A549 (cell line): ENCODE measurements at regions of chr17 and their contacts with region 1.

Region 1: GRCh38 chr17:75779231-75779986 is 5.2 kb upstream of the UNK start:
- DNase-seq: peak; percentile 100
- ATAC-seq: peak; percentile 55 to 82
- H3K4me3 ChIP-seq: peak overlapping the region; percentile 69
- H3K27ac ChIP-seq: peak overlapping the region; percentile 93 to 95
- H3K4me1 ChIP-seq: peaks cover 41% of the 10 kb centered on the region
- CTCF ChIP-seq: no peak; the same call in 2 of the 3 replicates
- EP300 ChIP-seq: no peak
- POLR2A ChIP-seq: peak; percentile 100
- RAD21 ChIP-seq: no peak

Region 2: GRCh38 chr17:75645889-75646637 is 133.3 kb before region 1 on chr17:
- CTCF ChIA-PET with region 1: interaction called, 4 read pairs
- POLR2A ChIA-PET with region 1: interaction called, 15 read pairs
- DNase-seq: peak; percentile 94 to 99
- ATAC-seq: peak; percentile 90 to 96
- H3K4me3 ChIP-seq: peak overlapping the region; percentile 25; the same call in 1 of the 3 replicates
- H3K27ac ChIP-seq: peak overlapping the region; percentile 91 to 92
- H3K4me1 ChIP-seq: peaks cover 31% of the 10 kb centered on the region
- CTCF ChIP-seq: no peak
- EP300 ChIP-seq: no peak
- POLR2A ChIP-seq: peak; percentile 38; the same call in 1 of the 2 replicates
- RAD21 ChIP-seq: no peak; a peak in 1 of 5 replicates

Region 3: DNA sequence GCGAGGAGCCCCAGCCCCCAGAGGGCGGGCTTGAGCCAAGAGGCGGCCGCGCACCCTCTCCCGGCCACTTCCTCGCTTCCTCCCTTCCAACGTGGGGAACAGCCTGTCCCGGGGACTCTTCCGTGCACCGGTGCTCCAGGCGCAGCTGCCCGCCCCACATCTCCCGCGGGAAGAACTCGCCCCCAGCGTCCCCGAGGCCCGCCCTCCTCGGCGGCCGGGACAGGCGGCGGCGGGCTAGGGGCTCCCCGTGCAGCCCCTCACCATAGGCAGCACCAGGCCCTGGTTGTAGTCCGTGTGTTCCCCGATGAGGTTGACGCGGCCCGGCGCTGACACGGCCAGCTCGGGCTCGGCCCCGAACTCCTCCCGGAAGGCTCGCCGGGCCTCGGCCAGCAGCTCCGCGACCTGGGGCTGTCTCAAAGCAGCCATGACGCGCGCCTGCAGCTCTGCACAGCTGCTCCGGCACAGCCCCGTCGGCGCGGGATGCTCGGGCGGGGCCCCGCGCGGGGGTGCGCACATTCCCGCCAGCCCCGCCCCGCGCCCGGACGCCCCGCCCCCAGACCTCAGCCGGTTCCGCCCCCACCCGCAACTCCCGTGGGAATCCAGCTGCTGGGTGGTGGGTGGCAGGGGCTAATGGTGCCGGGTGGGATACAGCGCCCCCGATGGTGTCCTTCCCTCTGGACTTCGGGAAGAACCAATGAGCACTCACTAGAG is 14.5 kb before region 1 on chr17 and contains the start of gene GALK1:
- CTCF ChIA-PET with region 1: interaction called, 131 read pairs
- POLR2A ChIA-PET with region 1: interaction called, 73 read pairs
- DNase-seq: peak; percentile 78 to 81
- ATAC-seq: peak; percentile 89 to 91
- H3K4me3 ChIP-seq: peak within 1 kb of the TSS; percentile 68
- H3K27ac ChIP-seq: peak within 1 kb of the TSS; percentile 83 to 92
- H3K4me1 ChIP-seq: peaks cover 13% of the 10 kb centered on the region
- CTCF ChIP-seq: peak; percentile 65
- EP300 ChIP-seq: no peak
- POLR2A ChIP-seq: peak; percentile 71
- RAD21 ChIP-seq: peak; percentile 59 to 66
- polyA plus RNA-seq, gene GALK1: 20.7 and 21.3 TPM in 2 replicates

Region 4: GRCh38 chr17:75814900-75815373 is 35.5 kb after region 1 on chr17:
- CTCF ChIA-PET with region 1: interaction called, 4 read pairs
- POLR2A ChIA-PET with region 1: interaction called, 25 read pairs
- DNase-seq: peak in 1 of 2 experiments; percentile 46
- ATAC-seq: peak; percentile 73 to 80
- H3K4me3 ChIP-seq: no peak overlapping the region
- H3K27ac ChIP-seq: peak overlapping the region; percentile 49 to 70; a peak in 4 of 6 replicates
- H3K4me1 ChIP-seq: peaks cover 14% of the 10 kb centered on the region
- CTCF ChIP-seq: no peak
- EP300 ChIP-seq: no peak
- POLR2A ChIP-seq: no peak
- RAD21 ChIP-seq: no peak

Region 5: DNA sequence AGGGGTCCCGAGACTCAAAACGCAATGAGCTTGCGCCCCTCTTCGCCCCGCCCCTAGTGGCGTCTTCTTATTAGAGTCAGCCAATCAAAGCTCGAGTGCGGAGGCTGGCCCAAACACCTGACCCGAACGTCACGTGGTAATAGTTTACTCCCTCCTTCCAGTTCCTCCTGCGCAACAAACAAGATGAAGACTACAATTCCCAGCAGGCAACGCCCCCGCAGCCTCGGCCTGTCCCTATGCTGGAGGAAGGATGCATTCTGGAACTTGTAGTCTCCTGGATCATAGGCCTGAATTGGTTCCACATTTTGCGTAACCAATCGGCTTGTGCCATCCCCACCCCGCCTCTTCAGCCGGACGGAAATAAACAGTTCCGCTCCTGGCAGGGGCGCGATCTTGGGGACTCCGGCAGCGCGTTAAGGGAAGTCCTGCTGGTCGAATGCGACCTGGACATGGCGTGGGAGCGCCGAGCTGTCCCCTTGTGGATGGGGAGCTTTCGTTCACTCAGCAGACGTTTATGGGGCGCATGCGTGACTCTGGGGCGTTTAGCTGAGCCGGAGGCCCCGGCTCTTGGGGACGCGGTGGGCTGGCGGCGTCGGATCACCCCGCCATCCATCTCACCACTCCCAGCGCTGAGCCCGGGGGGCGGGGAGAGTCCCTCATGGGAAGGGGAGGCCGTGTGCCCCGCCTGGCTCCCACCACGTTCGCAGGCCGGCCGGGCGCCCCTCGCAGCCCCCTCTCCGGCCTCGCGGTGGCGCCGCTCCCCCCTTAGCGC is 76.1 kb after region 1 on chr17 and contains the start of gene WBP2:
- CTCF ChIA-PET with region 1: interaction called, 5 read pairs
- POLR2A ChIA-PET with region 1: interaction called, 68 read pairs
- DNase-seq: peak; percentile 100
- ATAC-seq: peak; percentile 90 to 95
- H3K4me3 ChIP-seq: peak within 1 kb of the TSS; percentile 58
- H3K27ac ChIP-seq: peak within 1 kb of the TSS; percentile 83 to 91
- H3K4me1 ChIP-seq: peaks cover 19% of the 10 kb centered on the region
- CTCF ChIP-seq: peak; percentile 63
- EP300 ChIP-seq: no peak
- POLR2A ChIP-seq: peak; percentile 95
- RAD21 ChIP-seq: peak in 1 of 2 experiments; percentile 65; a peak in 4 of 5 replicates
- polyA plus RNA-seq, gene WBP2: 35.6 and 39.7 TPM in 2 replicates

Region 6: GRCh38 chr17:75896415-75897159 is 117.2 kb after region 1 on chr17 and contains the start of gene TRIM65:
- CTCF ChIA-PET with region 1: interaction called, 10 read pairs
- POLR2A ChIA-PET with region 1: interaction called, 10 read pairs
- DNase-seq: peak; percentile 69 to 83
- ATAC-seq: peak; percentile 76 to 80
- H3K4me3 ChIP-seq: peak within 1 kb of the TSS; percentile 84
- H3K27ac ChIP-seq: peak within 1 kb of the TSS; percentile 90 to 97
- H3K4me1 ChIP-seq: peaks cover 17% of the 10 kb centered on the region
- CTCF ChIP-seq: peak; percentile 59
- EP300 ChIP-seq: no peak
- POLR2A ChIP-seq: peak; percentile 95
- RAD21 ChIP-seq: peak; percentile 12 to 54; a peak in 3 of 5 replicates
- polyA plus RNA-seq, gene TRIM65: 13.5 and 17.4 TPM in 2 replicates

Region 7: GRCh38 chr17:75959051-75959838 is 179.8 kb after region 1 on chr17:
- CTCF ChIA-PET with region 1: no interaction called
- POLR2A ChIA-PET with region 1: no interaction called
- DNase-seq: no peak
- ATAC-seq: no peak; a peak in 1 of 6 replicates
- H3K4me3 ChIP-seq: no peak overlapping the region
- H3K27ac ChIP-seq: no peak overlapping the region
- H3K4me1 ChIP-seq: peaks cover 17% of the 10 kb centered on the region; the same call in 2 of the 3 replicates
- CTCF ChIP-seq: no peak
- EP300 ChIP-seq: no peak
- POLR2A ChIP-seq: no peak
- RAD21 ChIP-seq: no peak